ENCODE measurements at regions of chr6 and their contacts with region 1.

Region 1: GRCh38 chr6:3162565-3163247 is 5.4 kb upstream of the TUBB2A start:
- DNase-seq: peak; percentile 70
- H3K4me3 Mint-ChIP-seq: peak overlapping the region; percentile 77
- H3K27ac Mint-ChIP-seq: no peak overlapping the region
- H3K4me1 Mint-ChIP-seq: peaks cover 30% of the 10 kb centered on the region
- H3K27me3 Mint-ChIP-seq: peaks cover 8% of the 10 kb centered on the region

Region 2: DNA sequence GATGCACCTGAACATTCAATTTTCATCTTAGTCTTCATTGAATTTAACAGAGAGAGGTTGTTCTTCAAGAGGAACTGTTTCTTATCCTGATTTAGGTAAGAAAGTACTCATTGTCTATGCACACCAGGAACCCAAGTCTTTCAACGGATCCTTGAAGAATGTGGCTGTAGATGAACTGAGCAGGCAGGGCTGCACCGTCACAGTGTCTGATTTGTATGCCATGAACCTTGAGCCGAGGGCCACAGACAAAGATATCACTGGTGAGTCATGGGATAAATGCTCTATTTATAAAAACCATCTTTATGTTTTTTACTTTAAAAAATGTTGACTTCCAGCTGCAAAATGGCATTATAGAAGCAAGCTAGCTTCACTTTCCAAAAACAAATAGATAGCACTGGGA is 152.8 kb before region 1 on chr6:
- CTCF ChIA-PET with region 1: no interaction called
- POLR2A ChIA-PET with region 1: no interaction called
- intact Hi-C with region 1: no loop called
- DNase-seq: no peak
- H3K4me3 Mint-ChIP-seq: no peak overlapping the region
- H3K27ac Mint-ChIP-seq: no peak overlapping the region
- H3K4me1 Mint-ChIP-seq: peaks cover 4% of the 10 kb centered on the region
- H3K27me3 Mint-ChIP-seq: no peaks in the 10 kb centered on the region

Region 3: GRCh38 chr6:3176562-3177355 is 14.1 kb after region 1 on chr6:
- CTCF ChIA-PET with region 1: no interaction called
- POLR2A ChIA-PET with region 1: interaction called, 3 read pairs
- intact Hi-C with region 1: loop called (anchors 2 kb)
- DNase-seq: peak; percentile 76
- H3K4me3 Mint-ChIP-seq: no peak overlapping the region
- H3K27ac Mint-ChIP-seq: no peak overlapping the region
- H3K4me1 Mint-ChIP-seq: peaks cover 2% of the 10 kb centered on the region
- H3K27me3 Mint-ChIP-seq: no peaks in the 10 kb centered on the region

Region 4: DNA sequence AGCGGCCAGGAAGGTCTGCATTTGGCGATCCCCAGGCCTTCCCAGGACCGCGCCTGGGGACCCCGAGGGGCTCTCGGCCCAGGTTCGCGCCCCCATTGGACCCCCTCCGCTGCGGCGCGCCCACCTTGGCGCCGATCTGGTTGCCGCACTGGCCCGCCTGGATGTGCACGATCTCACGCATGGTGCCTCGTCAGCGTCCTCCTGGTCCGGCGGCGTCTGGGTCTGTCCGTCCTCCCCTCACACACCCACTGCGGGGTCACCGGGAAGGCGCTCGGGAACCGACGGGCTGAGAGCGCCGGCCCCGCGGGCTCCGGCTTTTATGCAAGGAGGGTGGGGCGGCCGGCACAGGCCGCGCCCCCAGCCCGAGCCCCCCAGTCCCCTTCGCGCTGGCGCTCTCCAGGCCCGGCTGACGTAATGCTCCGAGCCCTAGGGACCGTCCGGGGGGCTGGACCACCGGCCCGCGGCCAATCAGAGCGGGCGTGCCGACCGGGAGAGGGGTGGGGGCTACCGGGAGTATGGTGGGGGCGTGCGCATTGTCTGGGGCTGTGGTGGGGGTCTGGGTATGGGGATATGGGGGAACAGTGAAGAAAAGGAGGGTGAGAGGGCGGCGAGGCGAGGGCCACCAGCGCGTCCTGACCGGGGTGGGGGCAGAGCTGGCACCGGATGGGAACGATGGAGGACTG is 64.8 kb after region 1 on chr6 and contains the start of gene TUBB2B:
- CTCF ChIA-PET with region 1: interaction called, 3 read pairs
- POLR2A ChIA-PET with region 1: no interaction called
- intact Hi-C with region 1: loop called (anchors 2 kb)
- DNase-seq: no peak
- H3K4me3 Mint-ChIP-seq: peak within 1 kb of the TSS; percentile 65
- H3K27ac Mint-ChIP-seq: no peak within 1 kb of the TSS
- H3K4me1 Mint-ChIP-seq: peaks cover 44% of the 10 kb centered on the region
- H3K27me3 Mint-ChIP-seq: peaks cover 64% of the 10 kb centered on the region
- total RNA-seq, gene TUBB2B: 0.29 TPM in 1 of 2 experiments, not detected in the other